Cardiac septum (tissue), 1 donor: ENCODE measurements at regions of chr13 and their contacts with region 1.

Region 1: GRCh38 chr13:106874323-106874722 is 306.4 kb upstream of the ARGLU1 start:
- DNase-seq: no peak

Region 2: GRCh38 chr13:106701771-106702341 is 172.5 kb before region 1 on chr13:
- intact Hi-C with region 1: loop called (anchors 5 kb)
- DNase-seq: no peak

Region 3: DNA sequence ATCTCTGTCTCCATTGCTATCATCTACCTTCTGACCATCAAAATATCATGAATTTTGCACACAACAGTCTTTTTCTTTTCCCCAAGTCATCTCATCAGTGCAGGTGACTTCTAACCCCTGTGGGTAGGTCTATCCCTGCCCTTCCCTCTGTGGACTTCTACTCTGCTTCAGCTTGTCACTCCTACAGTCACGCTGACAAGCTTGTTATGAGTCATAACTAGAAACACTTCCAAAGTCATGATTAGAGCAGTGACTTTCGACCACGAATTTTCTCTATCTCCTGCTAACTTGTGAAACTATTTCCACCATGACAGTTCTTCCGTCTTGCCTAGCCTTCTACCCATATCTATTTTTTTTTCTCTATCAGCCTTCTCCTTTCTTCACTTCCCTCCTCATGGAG is 37.3 kb after region 1 on chr13:
- intact Hi-C with region 1: loop called (anchors 5 kb)
- DNase-seq: no peak

Region 4: GRCh38 chr13:106963151-106963550 is 88.8 kb after region 1 on chr13:
- intact Hi-C with region 1: no loop called
- DNase-seq: no peak